Caco-2 (cell line): ENCODE measurements at regions of chr4 and their contacts with region 1.

Region 1: GRCh38 chr4:10018818-10019461 is 2.4 kb downstream of the SLC2A9 start:
- DNase-seq: peak; percentile 93 to 94
- H3K4me3 ChIP-seq: peak overlapping the region; percentile 55
- H3K4me3 Mint-ChIP-seq: peak overlapping the region; percentile 82
- H3K27ac Mint-ChIP-seq: peak overlapping the region; percentile 92
- H3K4me1 ChIP-seq: peaks cover 64% of the 10 kb centered on the region
- H3K4me1 Mint-ChIP-seq: peaks cover 45% of the 10 kb centered on the region
- H3K27me3 ChIP-seq: no peaks in the 10 kb centered on the region
- H3K27me3 Mint-ChIP-seq: no peaks in the 10 kb centered on the region
- CTCF ChIP-seq: peak; percentile 95

Region 2: GRCh38 chr4:9691238-9692065 is 327.5 kb before region 1 on chr4:
- CTCF ChIA-PET with region 1: interaction called, 4 read pairs
- POLR2A ChIA-PET with region 1: no interaction called
- intact Hi-C with region 1: loop called (anchors 5 kb)
- DNase-seq: peak; percentile 96
- H3K4me3 ChIP-seq: peak overlapping the region; percentile 37
- H3K4me3 Mint-ChIP-seq: peak overlapping the region; percentile 73
- H3K27ac Mint-ChIP-seq: peak overlapping the region; percentile 68
- H3K4me1 ChIP-seq: no peaks in the 10 kb centered on the region
- H3K4me1 Mint-ChIP-seq: peaks cover 6% of the 10 kb centered on the region
- H3K27me3 ChIP-seq: no peaks in the 10 kb centered on the region
- H3K27me3 Mint-ChIP-seq: no peaks in the 10 kb centered on the region
- CTCF ChIP-seq: no peak

Region 3: DNA sequence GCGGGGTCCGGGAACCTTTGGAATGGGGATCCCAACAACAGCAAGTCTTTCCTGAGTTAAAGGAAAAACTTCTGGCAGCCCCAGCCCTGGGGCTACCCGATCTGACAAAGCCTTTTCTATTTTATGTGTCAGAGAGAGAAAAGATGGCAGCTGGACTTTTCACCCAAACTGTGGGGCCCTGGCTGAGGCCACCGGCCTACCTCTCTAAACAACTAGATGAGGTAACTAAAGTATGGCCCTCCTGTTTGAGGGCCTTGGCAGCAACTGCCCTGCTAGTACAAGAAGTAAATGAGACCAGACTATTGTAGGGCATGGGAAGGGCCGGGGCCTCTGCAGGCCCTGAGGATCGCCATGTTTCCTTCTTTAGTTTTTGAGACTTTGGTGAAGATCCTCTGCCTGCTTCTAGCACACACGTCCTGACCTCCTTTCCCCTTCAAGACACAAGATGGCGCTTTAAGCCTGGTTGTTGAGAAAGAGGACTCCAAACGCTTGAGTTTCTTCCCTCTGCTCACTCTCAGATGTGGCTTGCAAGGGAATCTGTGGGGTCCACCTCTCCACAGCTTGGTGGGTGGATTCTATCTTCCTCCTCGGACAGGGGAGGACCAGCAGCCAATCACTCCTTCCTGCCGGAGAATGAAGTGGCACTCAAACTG is 256.0 kb before region 1 on chr4:
- CTCF ChIA-PET with region 1: interaction called, 8 read pairs
- POLR2A ChIA-PET with region 1: no interaction called
- intact Hi-C with region 1: loop called (anchors 1 kb)
- DNase-seq: peak; percentile 63 to 72
- H3K4me3 ChIP-seq: no peak overlapping the region
- H3K4me3 Mint-ChIP-seq: no peak overlapping the region
- H3K27ac Mint-ChIP-seq: no peak overlapping the region
- H3K4me1 ChIP-seq: no peaks in the 10 kb centered on the region; the same call in 1 of the 2 replicates
- H3K4me1 Mint-ChIP-seq: no peaks in the 10 kb centered on the region
- H3K27me3 ChIP-seq: no peaks in the 10 kb centered on the region
- H3K27me3 Mint-ChIP-seq: peaks cover 10% of the 10 kb centered on the region
- CTCF ChIP-seq: peak; percentile 57 to 67

Region 4: DNA sequence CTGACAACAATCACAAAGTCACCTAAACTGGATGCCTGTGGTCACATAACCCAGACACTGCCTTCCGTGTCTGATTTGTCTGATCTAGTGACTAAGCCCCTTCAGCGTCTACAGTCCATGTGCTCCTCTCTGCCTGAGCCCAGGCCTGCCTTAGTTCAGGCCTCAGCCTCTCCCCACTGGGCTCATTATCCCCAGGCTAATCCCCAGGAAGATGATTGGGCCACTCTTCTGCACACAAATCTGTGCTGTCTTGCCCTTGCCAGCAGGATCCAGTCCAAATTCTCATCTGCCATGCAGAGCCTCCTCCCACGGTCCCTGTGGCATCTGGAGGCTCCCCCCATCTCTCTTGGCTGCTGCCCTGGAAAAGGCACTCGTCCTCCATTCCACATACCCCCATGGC is 94.2 kb before region 1 on chr4:
- CTCF ChIA-PET with region 1: no interaction called
- POLR2A ChIA-PET with region 1: no interaction called
- intact Hi-C with region 1: loop called (anchors 5 kb)
- DNase-seq: no peak
- H3K4me3 ChIP-seq: no peak overlapping the region
- H3K4me3 Mint-ChIP-seq: no peak overlapping the region
- H3K27ac Mint-ChIP-seq: peak overlapping the region; percentile 55
- H3K4me1 ChIP-seq: no peaks in the 10 kb centered on the region
- H3K4me1 Mint-ChIP-seq: no peaks in the 10 kb centered on the region
- H3K27me3 ChIP-seq: no peaks in the 10 kb centered on the region
- H3K27me3 Mint-ChIP-seq: no peaks in the 10 kb centered on the region
- CTCF ChIP-seq: no peak

Region 5: DNA sequence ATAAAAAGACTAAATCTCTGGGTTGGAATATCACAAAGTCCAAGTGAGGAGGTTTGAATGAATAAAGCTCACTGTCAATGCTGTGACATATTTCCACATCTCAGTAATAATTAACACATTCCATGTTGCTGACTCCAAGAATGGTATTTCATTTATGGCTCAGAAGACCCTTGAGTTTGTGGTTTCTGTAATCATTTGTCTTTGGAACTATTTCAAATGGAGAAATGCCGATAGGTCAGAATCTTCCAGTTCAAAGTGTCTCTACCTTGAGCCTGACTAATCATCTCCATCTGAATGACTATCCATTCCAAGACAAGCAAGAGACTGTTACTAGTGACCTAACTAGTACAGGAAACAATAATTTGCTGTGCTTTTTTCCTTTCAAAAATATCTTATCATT is 26.5 kb after region 1 on chr4:
- CTCF ChIA-PET with region 1: interaction called, 4 read pairs
- POLR2A ChIA-PET with region 1: no interaction called
- intact Hi-C with region 1: loop called (anchors 1 kb)
- DNase-seq: peak in 1 of 2 experiments; percentile 64
- H3K4me3 ChIP-seq: no peak overlapping the region
- H3K4me3 Mint-ChIP-seq: no peak overlapping the region
- H3K27ac Mint-ChIP-seq: peak overlapping the region; percentile 71
- H3K4me1 ChIP-seq: peaks cover 51% of the 10 kb centered on the region
- H3K4me1 Mint-ChIP-seq: peaks cover 34% of the 10 kb centered on the region
- H3K27me3 ChIP-seq: no peaks in the 10 kb centered on the region
- H3K27me3 Mint-ChIP-seq: no peaks in the 10 kb centered on the region
- CTCF ChIP-seq: no peak

Region 6: DNA sequence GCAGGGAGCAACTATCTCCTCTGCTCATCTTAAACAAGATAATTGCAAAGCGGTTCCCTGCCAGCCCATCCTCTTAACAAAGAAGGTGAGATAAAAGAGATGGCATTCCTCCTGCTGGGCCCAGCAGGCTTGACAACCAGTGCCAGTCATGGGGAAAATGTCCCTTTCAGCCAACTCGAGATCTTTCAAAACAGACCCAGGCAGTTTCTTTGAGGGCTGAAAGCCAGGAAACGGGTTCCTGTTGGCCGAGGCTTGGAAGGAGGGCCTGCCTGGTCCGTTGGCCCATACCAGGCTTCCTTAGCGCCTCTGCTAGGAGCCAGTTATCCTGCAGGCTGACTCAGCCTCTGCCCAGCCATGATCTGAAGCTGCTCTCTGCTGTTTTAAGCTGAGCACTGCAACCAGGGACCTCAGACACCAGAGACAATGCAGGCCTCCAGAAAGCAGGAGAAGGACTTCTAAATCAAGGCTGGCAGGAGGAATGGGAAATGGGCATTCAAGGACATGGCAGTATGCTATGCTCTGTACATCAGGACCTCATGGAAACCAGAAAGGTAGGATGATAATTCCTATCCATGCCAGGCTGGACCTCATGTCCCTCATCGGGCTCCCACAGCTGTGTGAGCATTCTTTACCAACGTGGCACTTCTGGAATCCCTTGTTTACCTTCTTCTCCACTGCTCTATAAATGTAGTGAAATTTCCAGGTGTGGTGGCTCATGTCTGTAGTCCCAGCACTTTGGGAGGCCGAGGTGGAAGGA is 44.8 kb after region 1 on chr4:
- CTCF ChIA-PET with region 1: interaction called, 13 read pairs
- POLR2A ChIA-PET with region 1: no interaction called
- intact Hi-C with region 1: loop called (anchors 1 kb)
- DNase-seq: peak; percentile 67 to 72
- H3K4me3 ChIP-seq: no peak overlapping the region
- H3K4me3 Mint-ChIP-seq: no peak overlapping the region
- H3K27ac Mint-ChIP-seq: no peak overlapping the region
- H3K4me1 ChIP-seq: no peaks in the 10 kb centered on the region; the same call in 1 of the 2 replicates
- H3K4me1 Mint-ChIP-seq: no peaks in the 10 kb centered on the region
- H3K27me3 ChIP-seq: no peaks in the 10 kb centered on the region
- H3K27me3 Mint-ChIP-seq: no peaks in the 10 kb centered on the region
- CTCF ChIP-seq: peak; percentile 56 to 79

Region 7: GRCh38 chr4:10116580-10117358 is 97.8 kb after region 1 on chr4 and contains the start of gene WDR1:
- CTCF ChIA-PET with region 1: no interaction called
- POLR2A ChIA-PET with region 1: interaction called, 4 read pairs
- intact Hi-C with region 1: loop called (anchors 2 kb)
- DNase-seq: peak; percentile 95
- H3K4me3 ChIP-seq: peak within 1 kb of the TSS; percentile 89
- H3K4me3 Mint-ChIP-seq: peak within 1 kb of the TSS; percentile 94
- H3K27ac Mint-ChIP-seq: peak within 1 kb of the TSS; percentile 99
- H3K4me1 ChIP-seq: peaks cover 16% of the 10 kb centered on the region
- H3K4me1 Mint-ChIP-seq: peaks cover 32% of the 10 kb centered on the region
- H3K27me3 ChIP-seq: no peaks in the 10 kb centered on the region
- H3K27me3 Mint-ChIP-seq: no peaks in the 10 kb centered on the region
- CTCF ChIP-seq: no peak
- total RNA-seq, gene WDR1: 250 and 270 TPM in 2 replicates